Naive thymus-derived CD4-positive, alpha-beta T cell (primary cell): ENCODE measurements at regions of chr3 and their contacts with region 1.

Region 1: DNA sequence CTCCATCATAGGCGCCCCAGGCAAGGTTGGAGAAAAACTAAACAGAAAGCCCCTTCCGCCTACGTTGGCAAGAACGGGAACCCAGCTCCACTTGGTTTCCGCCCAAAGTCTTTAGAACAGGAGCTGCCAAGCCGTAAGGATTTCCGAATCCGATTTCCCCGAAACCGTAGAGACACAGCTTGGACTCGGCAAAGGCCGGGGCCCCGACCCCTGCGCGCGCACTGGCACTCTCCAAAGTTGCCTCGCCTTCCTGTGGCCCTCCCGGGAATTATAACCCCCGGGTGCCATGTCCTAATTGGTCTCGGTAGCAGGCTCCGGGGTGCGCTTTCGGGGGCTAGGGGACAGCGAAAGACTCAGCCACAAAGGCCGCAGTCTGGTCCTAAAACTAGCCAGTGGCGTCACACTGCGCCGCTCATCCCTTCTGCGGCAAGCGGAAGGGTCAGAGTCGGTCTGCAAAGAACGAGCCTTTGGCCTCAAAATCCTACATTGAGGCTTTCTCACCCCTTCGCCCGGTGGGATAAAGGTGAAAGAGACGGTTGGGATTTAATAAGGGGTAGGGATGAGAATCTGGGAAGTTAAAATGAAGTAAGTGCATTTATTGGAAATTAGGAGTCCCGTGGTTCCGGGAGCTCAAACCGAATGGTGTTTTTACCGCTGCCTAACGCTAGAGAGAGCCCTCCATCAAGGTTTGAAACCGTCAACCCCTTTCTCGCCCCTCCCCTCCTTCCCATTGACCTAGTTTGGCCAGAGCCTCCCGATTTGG is 6.8 kb downstream of the BCL6 start:
- DNase-seq: peak in 8 of 9 donors; percentile 39 to 70 (median 66)
- ATAC-seq: peak; percentile 60
- H3K4me3 ChIP-seq: peak overlapping the region; percentile 79
- H3K4me3 Mint-ChIP-seq: peak overlapping the region; percentile 86 to 100 (median 98)
- H3K27ac ChIP-seq: peak overlapping the region; percentile 72
- H3K27ac Mint-ChIP-seq: peak overlapping the region; percentile 83 to 100 (median 100)
- H3K4me1 ChIP-seq: peaks cover 12 to 23% of the 10 kb centered on the region in 2 donors
- H3K4me1 Mint-ChIP-seq: peaks cover 27 to 63% (median 43%) of the 10 kb centered on the region in 7 donors
- H3K27me3 ChIP-seq: no peaks in the 10 kb centered on the region
- H3K27me3 Mint-ChIP-seq: peaks cover 0 to 3% (median 0%) of the 10 kb centered on the region in 5 donors

Region 2: DNA sequence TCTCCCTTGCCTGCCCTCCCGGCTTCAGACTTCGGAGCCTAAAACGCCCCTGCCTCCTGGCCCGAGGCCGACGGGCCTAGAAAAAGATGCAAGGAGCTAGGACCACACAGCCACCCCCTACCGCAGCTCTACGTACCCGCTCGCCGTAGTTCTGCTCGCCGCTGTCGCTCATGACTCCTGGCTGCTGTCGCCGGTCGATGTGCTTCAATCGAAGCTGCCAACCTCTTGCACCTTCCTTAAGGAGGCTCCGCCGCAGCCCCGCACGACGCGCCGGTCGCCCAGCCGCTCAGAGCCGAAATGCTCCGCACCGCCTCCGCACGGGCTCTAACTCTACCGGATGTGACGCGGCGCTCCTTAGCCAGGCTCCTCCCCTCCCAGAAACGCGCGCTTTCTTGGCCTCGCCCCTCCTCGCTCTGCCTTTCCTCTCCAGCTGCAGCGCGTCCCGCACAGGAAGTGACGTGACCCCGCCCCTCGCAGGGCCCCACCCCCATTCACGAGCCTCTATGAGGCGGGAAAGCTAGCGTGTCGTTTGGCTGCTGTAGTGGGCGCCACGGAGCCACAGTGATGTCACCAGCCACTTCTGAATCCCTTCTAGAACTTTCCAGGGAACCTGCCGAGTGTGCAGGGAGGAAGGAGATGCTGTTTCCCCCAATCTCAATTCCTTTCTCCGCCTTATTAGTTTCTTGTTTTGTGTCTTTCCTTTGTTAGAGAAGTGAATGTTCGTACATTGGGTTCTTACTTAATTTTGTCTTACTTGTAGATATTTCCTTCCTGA is 1800.6 kb before region 1 on chr3 and contains the start of gene TRA2B:
- CTCF ChIA-PET with region 1: no interaction called
- POLR2A ChIA-PET with region 1: no interaction called
- intact Hi-C with region 1: loop called in 1 of 2 experiments (anchors 5 kb)
- DNase-seq: peak; percentile 93 to 99 (median 99)
- ATAC-seq: peak; percentile 94
- H3K4me3 ChIP-seq: peak within 1 kb of the TSS; percentile 99
- H3K4me3 Mint-ChIP-seq: peak within 1 kb of the TSS; percentile 91 to 100 (median 100)
- H3K27ac ChIP-seq: peak within 1 kb of the TSS; percentile 95
- H3K27ac Mint-ChIP-seq: peak within 1 kb of the TSS; percentile 99 to 100 (median 100)
- H3K4me1 ChIP-seq: peaks cover 16 to 20% of the 10 kb centered on the region in 2 donors
- H3K4me1 Mint-ChIP-seq: peaks cover 27 to 52% (median 41%) of the 10 kb centered on the region in 7 donors
- H3K27me3 ChIP-seq: no peaks in the 10 kb centered on the region
- H3K27me3 Mint-ChIP-seq: peaks cover 0 to 16% (median 0%) of the 10 kb centered on the region in 5 donors
- total RNA-seq, gene TRA2B: 194 to 673 (median 216) TPM

Region 3: DNA sequence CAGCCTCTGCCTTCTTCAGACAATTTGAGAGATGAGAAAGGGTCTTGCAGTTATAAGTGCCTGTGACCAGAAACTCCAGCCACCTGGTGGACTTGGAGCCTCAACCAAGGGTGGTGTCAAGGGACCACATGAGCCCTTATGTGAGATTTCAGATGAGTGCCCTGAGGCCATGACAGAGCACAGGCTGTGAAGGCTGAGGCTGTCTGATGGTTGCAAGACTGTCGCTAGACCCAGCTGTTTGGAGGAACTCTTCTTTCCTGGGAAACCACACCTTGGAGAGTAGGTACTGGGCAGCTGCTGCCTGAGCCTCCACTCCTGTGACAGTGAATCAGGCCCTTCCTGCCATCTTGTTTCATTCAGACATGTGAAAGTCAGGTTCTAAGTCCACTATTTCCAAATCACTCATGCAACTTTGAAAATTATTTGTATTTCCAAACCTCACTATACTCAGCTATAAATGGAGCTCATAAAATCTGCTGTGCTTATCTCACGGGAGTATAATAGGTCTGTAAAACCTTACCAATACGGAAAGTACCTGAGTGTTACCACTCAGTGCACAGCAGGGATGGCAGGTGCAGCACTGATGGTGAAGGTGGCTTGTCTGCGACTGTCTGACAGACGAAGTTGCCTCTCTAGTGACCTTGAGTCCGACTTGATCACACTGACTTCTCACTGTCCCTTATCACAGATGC is 698.6 kb before region 1 on chr3:
- CTCF ChIA-PET with region 1: no interaction called
- POLR2A ChIA-PET with region 1: no interaction called
- intact Hi-C with region 1: no loop called
- DNase-seq: no peak
- ATAC-seq: no peak
- H3K4me3 ChIP-seq: no peak overlapping the region
- H3K4me3 Mint-ChIP-seq: peak overlapping the region in 8 of 10 donors; percentile 32 to 73 (median 64)
- H3K27ac ChIP-seq: peak overlapping the region; percentile 67
- H3K27ac Mint-ChIP-seq: peak overlapping the region; percentile 88 to 99 (median 95)
- H3K4me1 ChIP-seq: peaks cover 36 to 61% of the 10 kb centered on the region in 2 donors
- H3K4me1 Mint-ChIP-seq: peaks cover 47 to 91% (median 74%) of the 10 kb centered on the region in 7 donors
- H3K27me3 ChIP-seq: no peaks in the 10 kb centered on the region
- H3K27me3 Mint-ChIP-seq: no peaks in the 10 kb centered on the region

Region 4: DNA sequence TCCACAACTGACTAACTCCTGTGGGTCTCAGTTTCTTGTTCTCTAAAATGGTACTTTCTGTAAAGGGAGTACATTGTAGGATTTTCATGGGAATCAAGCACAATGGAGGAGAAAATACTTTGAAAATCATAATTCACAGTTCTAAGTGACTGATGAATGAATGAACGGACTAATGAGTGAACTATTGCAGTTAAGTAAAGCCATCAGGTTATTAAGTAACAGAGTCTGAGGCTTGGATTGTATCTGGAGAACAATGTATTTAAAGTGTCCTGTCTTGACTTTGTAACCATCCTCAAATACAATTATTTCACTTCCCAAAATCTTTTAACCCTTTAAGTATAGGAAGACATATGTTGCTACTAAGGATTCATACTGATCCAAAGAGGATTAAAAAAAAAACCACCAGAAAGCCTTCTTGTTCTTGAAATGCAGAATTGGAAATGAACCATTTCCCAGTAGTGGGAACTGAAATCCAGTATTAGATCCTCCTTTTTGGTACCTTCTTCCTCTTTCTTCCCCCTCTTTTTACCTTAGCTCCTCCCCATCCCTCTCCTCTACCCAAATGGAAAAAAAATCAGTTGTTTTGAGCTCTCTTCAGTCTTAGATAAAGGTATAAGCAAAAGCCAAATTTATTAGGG is 19.9 kb after region 1 on chr3:
- CTCF ChIA-PET with region 1: no interaction called
- POLR2A ChIA-PET with region 1: no interaction called
- intact Hi-C with region 1: no loop called
- DNase-seq: no peak
- ATAC-seq: no peak
- H3K4me3 ChIP-seq: no peak overlapping the region
- H3K4me3 Mint-ChIP-seq: no peak overlapping the region
- H3K27ac ChIP-seq: no peak overlapping the region
- H3K27ac Mint-ChIP-seq: no peak overlapping the region
- H3K4me1 ChIP-seq: no peaks in the 10 kb centered on the region
- H3K4me1 Mint-ChIP-seq: peaks cover 0 to 16% (median 0%) of the 10 kb centered on the region in 7 donors
- H3K27me3 ChIP-seq: no peaks in the 10 kb centered on the region
- H3K27me3 Mint-ChIP-seq: no peaks in the 10 kb centered on the region

Region 5: DNA sequence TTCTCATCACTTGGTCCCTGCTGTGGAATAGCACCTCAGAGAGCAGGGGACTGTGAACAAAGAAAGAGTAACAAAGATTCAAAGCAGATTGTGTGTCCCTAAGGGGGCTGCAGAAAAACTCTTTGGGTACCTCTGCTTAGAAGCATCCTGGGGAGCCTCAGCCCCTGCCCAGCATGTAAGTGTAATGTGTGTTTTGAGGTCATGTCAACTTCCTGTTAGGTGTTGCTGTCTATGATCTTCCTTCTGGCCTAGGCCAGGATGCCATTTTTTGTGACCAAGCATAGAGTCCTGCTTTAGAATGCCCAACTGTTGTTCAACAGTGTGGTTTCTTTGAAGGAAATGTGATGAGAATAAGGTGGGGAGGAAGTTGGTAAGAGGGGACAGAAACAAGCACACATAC is 83.9 kb after region 1 on chr3:
- CTCF ChIA-PET with region 1: no interaction called
- POLR2A ChIA-PET with region 1: no interaction called
- intact Hi-C with region 1: no loop called
- DNase-seq: no peak
- ATAC-seq: peak; percentile 59
- H3K4me3 ChIP-seq: no peak overlapping the region
- H3K4me3 Mint-ChIP-seq: peak overlapping the region in 1 of 10 donors; percentile 15
- H3K27ac ChIP-seq: no peak overlapping the region
- H3K27ac Mint-ChIP-seq: peak overlapping the region in 3 of 9 donors; percentile 34 to 82 (median 62)
- H3K4me1 ChIP-seq: peaks cover 4 to 14% of the 10 kb centered on the region in 2 donors
- H3K4me1 Mint-ChIP-seq: peaks cover 8 to 25% (median 10%) of the 10 kb centered on the region in 7 donors
- H3K27me3 ChIP-seq: no peaks in the 10 kb centered on the region
- H3K27me3 Mint-ChIP-seq: no peaks in the 10 kb centered on the region

Region 6: GRCh38 chr3:187968883-187969580 is 230.5 kb after region 1 on chr3:
- CTCF ChIA-PET with region 1: no interaction called
- POLR2A ChIA-PET with region 1: no interaction called
- intact Hi-C with region 1: no loop called
- DNase-seq: no peak
- ATAC-seq: peak; percentile 59
- H3K4me3 ChIP-seq: no peak overlapping the region
- H3K4me3 Mint-ChIP-seq: no peak overlapping the region
- H3K27ac ChIP-seq: no peak overlapping the region
- H3K27ac Mint-ChIP-seq: peak overlapping the region in 1 of 9 donors; percentile 20
- H3K4me1 ChIP-seq: no peaks in the 10 kb centered on the region
- H3K4me1 Mint-ChIP-seq: peaks cover 0 to 27% (median 3%) of the 10 kb centered on the region in 7 donors
- H3K27me3 ChIP-seq: no peaks in the 10 kb centered on the region
- H3K27me3 Mint-ChIP-seq: peaks cover 0 to 5% (median 0%) of the 10 kb centered on the region in 5 donors

Region 7: GRCh38 chr3:188320757-188321156 is 582.2 kb after region 1 on chr3:
- CTCF ChIA-PET with region 1: interaction called, 3 read pairs
- POLR2A ChIA-PET with region 1: no interaction called
- intact Hi-C with region 1: loop called in 1 of 2 experiments (anchors 1 kb)
- DNase-seq: no peak
- ATAC-seq: no peak
- H3K4me3 ChIP-seq: no peak overlapping the region
- H3K4me3 Mint-ChIP-seq: peak overlapping the region in 1 of 10 donors; percentile 37
- H3K27ac ChIP-seq: no peak overlapping the region
- H3K27ac Mint-ChIP-seq: peak overlapping the region in 2 of 9 donors; percentile 11 to 59
- H3K4me1 ChIP-seq: peaks cover 19 to 26% of the 10 kb centered on the region in 2 donors
- H3K4me1 Mint-ChIP-seq: peaks cover 34 to 67% (median 55%) of the 10 kb centered on the region in 7 donors
- H3K27me3 ChIP-seq: no peaks in the 10 kb centered on the region
- H3K27me3 Mint-ChIP-seq: peaks cover 0 to 6% (median 0%) of the 10 kb centered on the region in 5 donors

Region 8: GRCh38 chr3:188584162-188584529 is 845.6 kb after region 1 on chr3:
- CTCF ChIA-PET with region 1: no interaction called
- POLR2A ChIA-PET with region 1: no interaction called
- intact Hi-C with region 1: loop called (anchors 5 to 10 kb)
- DNase-seq: peak in 1 of 9 donors; percentile 22
- ATAC-seq: no peak
- H3K4me3 ChIP-seq: no peak overlapping the region
- H3K4me3 Mint-ChIP-seq: peak overlapping the region in 1 of 10 donors; percentile 40
- H3K27ac ChIP-seq: no peak overlapping the region
- H3K27ac Mint-ChIP-seq: peak overlapping the region in 2 of 9 donors; percentile 5 to 50
- H3K4me1 ChIP-seq: no peaks in the 10 kb centered on the region
- H3K4me1 Mint-ChIP-seq: peaks cover 4 to 15% (median 5%) of the 10 kb centered on the region in 7 donors
- H3K27me3 ChIP-seq: no peaks in the 10 kb centered on the region
- H3K27me3 Mint-ChIP-seq: no peaks in the 10 kb centered on the region

Region 9: GRCh38 chr3:188830893-188831292 is 1092.4 kb after region 1 on chr3:
- CTCF ChIA-PET with region 1: interaction called, 6 read pairs
- POLR2A ChIA-PET with region 1: no interaction called
- intact Hi-C with region 1: loop called (anchors 2 to 5 kb)
- DNase-seq: no peak
- ATAC-seq: peak; percentile 59
- H3K4me3 ChIP-seq: no peak overlapping the region
- H3K4me3 Mint-ChIP-seq: no peak overlapping the region
- H3K27ac ChIP-seq: no peak overlapping the region
- H3K27ac Mint-ChIP-seq: no peak overlapping the region
- H3K4me1 ChIP-seq: peaks cover 0 to 9% of the 10 kb centered on the region in 2 donors
- H3K4me1 Mint-ChIP-seq: peaks cover 6 to 24% (median 18%) of the 10 kb centered on the region in 7 donors
- H3K27me3 ChIP-seq: no peaks in the 10 kb centered on the region
- H3K27me3 Mint-ChIP-seq: no peaks in the 10 kb centered on the region

Region 10: GRCh38 chr3:189132231-189132707 is 1393.8 kb after region 1 on chr3:
- CTCF ChIA-PET with region 1: interaction called, 163 read pairs
- POLR2A ChIA-PET with region 1: interaction called, 4 read pairs
- intact Hi-C with region 1: loop called (anchors 1 kb)
- DNase-seq: peak in 8 of 9 donors; percentile 20 to 76 (median 62)
- ATAC-seq: peak; percentile 96
- H3K4me3 ChIP-seq: peak overlapping the region; percentile 26
- H3K4me3 Mint-ChIP-seq: peak overlapping the region; percentile 39 to 83 (median 71)
- H3K27ac ChIP-seq: peak overlapping the region; percentile 22
- H3K27ac Mint-ChIP-seq: peak overlapping the region; percentile 43 to 98 (median 79)
- H3K4me1 ChIP-seq: peaks cover 13 to 34% of the 10 kb centered on the region in 2 donors
- H3K4me1 Mint-ChIP-seq: peaks cover 13 to 38% (median 23%) of the 10 kb centered on the region in 7 donors
- H3K27me3 ChIP-seq: no peaks in the 10 kb centered on the region
- H3K27me3 Mint-ChIP-seq: no peaks in the 10 kb centered on the region

Region 11: DNA sequence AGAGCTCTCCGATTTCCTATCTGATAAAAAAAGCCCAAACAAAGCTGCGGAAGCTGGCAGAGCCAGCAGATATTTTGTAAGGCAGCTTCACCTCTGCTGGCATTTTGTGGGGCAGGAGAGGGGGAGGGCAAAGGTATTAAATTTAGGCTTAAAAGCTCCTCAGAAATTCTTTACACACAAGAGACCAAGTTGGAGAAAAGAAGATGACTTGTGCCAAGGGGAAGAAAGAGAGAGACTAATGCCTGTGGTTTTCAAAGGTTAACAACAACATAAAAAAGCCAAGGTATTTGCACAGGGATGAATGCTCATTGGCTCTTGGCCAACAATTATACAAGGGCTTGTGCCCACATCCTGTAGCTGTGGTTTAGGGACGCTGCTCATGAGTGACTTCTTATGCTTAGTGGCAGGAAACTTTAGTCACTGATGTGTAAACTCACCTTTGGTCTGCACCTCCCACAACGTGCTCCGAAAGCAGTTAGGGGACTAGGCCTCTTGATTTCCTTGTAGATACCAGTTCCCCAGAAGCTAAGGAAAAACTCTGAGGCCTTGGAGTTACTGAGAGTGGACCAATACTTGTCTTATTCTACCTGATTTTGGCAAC is 1586.1 kb after region 1 on chr3:
- CTCF ChIA-PET with region 1: no interaction called
- POLR2A ChIA-PET with region 1: no interaction called
- intact Hi-C with region 1: loop called (anchors 1 to 5 kb)
- DNase-seq: peak; percentile 15 to 96 (median 94)
- ATAC-seq: peak; percentile 98
- H3K4me3 ChIP-seq: peak overlapping the region; percentile 21
- H3K4me3 Mint-ChIP-seq: peak overlapping the region; percentile 72 to 87 (median 82)
- H3K27ac ChIP-seq: peak overlapping the region; percentile 51
- H3K27ac Mint-ChIP-seq: peak overlapping the region; percentile 86 to 100 (median 94)
- H3K4me1 ChIP-seq: peaks cover 33 to 46% of the 10 kb centered on the region in 2 donors
- H3K4me1 Mint-ChIP-seq: peaks cover 27 to 80% (median 73%) of the 10 kb centered on the region in 7 donors
- H3K27me3 ChIP-seq: no peaks in the 10 kb centered on the region
- H3K27me3 Mint-ChIP-seq: peaks cover 0 to 4% (median 0%) of the 10 kb centered on the region in 5 donors